ENCODE measurements at regions of chr1 and their contacts with region 1.

Region 1: DNA sequence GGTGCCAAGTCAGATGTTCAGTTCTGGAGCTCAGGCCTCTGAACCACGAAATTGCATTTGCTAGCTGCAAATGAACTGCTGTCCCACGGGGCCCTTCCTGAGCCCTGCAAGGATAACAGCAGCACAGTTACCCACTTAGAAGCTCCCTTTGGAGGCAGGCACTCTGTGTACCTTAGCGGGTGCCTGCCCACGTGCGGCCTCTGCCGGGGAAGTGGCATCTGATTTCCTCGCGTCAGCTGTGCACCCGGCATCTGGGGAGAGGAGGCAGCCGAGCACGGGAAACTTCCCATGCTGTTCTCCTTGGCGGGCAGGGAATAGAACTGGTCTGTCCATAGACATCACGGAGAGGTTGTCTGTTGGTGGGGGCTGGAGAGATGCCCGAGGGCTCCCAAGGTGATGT is 148.0 kb upstream of the C1orf174 start:
- DNase-seq: no peak
- ATAC-seq: no peak
- H3K4me3 Mint-ChIP-seq: no peak overlapping the region
- H3K27ac Mint-ChIP-seq: no peak overlapping the region
- H3K4me1 Mint-ChIP-seq: peaks cover 62% of the 10 kb centered on the region
- H3K27me3 Mint-ChIP-seq: peaks cover 2% of the 10 kb centered on the region
- CTCF ChIP-seq: no peak

Region 2: DNA sequence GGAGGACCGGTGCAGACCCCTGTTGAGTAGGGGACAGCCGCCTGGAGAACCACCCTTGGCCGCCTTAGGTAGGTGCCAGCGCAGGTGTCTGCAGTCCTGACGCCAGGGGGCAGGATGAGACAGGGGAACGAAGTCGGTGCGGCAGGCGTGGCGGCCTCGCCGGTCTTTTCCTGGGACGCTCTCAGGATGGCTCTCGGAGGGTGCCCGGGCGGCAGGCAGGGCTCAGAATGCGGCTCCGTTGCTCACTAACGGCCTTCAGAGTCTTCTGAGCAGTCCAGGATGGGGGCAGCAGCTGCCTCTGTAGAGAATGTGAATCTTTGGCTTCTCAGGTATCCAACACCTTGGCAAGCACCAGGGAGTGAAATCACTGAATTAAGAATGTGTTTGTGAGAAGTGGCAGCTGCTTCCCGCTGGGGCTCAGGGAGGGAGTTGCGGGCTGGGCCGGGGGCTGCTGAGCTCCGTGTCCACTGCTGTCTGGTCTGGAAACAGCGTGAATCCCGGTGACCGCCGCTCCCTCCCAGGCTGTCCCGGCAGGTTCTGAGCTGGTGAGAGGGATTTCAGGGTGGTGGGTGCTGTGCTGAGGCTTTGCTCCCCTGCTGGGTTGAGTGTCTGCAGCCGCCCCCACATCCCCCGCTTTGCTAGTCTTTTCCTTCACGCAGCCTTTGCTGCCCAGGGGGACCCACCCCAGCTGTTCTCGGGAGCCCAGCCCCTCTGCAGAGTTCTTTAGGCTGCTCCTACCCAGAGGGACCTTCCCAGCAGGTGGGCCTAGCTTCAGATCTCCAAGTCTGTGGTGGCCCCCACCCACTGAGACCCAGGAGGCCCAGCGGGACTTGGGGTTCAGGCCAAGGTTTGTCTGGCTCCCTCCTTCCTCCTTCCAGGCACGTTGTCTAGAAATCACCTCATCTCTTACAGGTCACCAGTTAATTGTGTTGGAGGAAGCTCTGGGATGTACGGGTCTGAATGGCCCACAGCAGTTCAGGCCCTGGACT is 136.9 kb before region 1 on chr1:
- CTCF ChIA-PET with region 1: interaction called, 10 read pairs
- POLR2A ChIA-PET with region 1: no interaction called
- intact Hi-C with region 1: loop called (anchors 5 kb)
- DNase-seq: peak; percentile 70
- ATAC-seq: peak; percentile 92
- H3K4me3 Mint-ChIP-seq: no peak overlapping the region
- H3K27ac Mint-ChIP-seq: no peak overlapping the region
- H3K4me1 Mint-ChIP-seq: peaks cover 23% of the 10 kb centered on the region
- H3K27me3 Mint-ChIP-seq: peaks cover 3% of the 10 kb centered on the region
- CTCF ChIP-seq: peak; percentile 67

Region 3: DNA sequence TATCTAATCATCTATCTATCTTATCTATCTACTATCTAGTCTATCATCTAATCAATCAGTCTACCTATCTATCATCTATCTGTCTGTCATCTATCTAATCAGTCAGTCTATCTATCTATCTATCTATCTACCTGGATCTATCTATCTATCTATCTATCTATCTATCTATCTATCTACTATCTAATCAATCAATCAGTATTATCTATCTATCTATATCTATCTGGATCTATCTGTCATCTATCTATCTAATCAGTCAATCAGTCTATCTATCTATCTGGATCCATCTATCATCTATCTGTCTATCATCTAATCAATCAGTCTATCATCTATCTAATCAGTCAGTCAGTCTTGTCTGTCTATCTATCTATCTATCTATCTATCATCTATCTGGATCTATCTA is 121.1 kb before region 1 on chr1:
- CTCF ChIA-PET with region 1: no interaction called
- POLR2A ChIA-PET with region 1: no interaction called
- intact Hi-C with region 1: no loop called
- DNase-seq: no peak
- ATAC-seq: no peak
- H3K4me3 Mint-ChIP-seq: no peak overlapping the region
- H3K27ac Mint-ChIP-seq: no peak overlapping the region
- H3K4me1 Mint-ChIP-seq: peaks cover 3% of the 10 kb centered on the region
- H3K27me3 Mint-ChIP-seq: no peaks in the 10 kb centered on the region
- CTCF ChIP-seq: no peak

Region 4: GRCh38 chr1:4006676-4007374 is 41.3 kb before region 1 on chr1:
- CTCF ChIA-PET with region 1: no interaction called
- POLR2A ChIA-PET with region 1: interaction called, 5 read pairs
- intact Hi-C with region 1: loop called (anchors 5 kb)
- DNase-seq: no peak
- ATAC-seq: peak; percentile 62
- H3K4me3 Mint-ChIP-seq: peak overlapping the region; percentile 50
- H3K27ac Mint-ChIP-seq: peak overlapping the region; percentile 93
- H3K4me1 Mint-ChIP-seq: peaks cover 28% of the 10 kb centered on the region
- H3K27me3 Mint-ChIP-seq: no peaks in the 10 kb centered on the region
- CTCF ChIP-seq: no peak

Region 5: DNA sequence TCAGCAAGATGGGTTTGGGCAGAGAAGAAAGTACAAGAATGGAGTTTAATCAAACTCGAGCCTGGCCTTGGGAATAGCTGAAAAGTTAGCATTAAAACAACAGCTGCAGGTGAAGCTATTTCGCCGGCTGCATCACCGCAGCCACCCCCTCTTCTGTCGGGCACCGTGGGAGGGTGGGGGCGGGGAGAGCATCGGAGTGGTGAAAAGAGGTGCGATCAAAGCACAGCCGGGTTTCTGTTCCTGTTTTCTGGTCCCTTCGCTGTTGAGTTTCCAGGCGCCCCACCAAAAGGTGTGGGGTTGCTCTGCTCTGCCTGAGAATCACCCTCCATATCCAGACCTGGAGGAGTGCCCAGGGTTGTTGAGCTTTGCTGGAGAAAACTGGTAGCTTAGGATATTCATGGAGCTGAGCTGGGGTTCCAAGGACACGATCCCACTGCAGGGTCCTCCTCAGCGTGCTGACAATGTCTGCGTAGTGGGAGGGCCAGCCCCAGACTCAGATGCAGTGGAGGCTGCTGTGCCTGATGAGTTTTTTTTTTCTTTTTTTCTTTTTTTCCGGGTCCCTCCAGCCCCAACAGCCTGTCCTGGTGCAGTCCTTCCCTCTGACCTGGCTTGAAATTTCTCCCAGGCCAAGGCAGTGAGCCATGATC is 20.5 kb before region 1 on chr1:
- CTCF ChIA-PET with region 1: no interaction called
- POLR2A ChIA-PET with region 1: interaction called, 4 read pairs
- intact Hi-C with region 1: loop called (anchors 2 kb)
- DNase-seq: peak; percentile 65
- ATAC-seq: peak; percentile 94
- H3K4me3 Mint-ChIP-seq: peak overlapping the region; percentile 69
- H3K27ac Mint-ChIP-seq: peak overlapping the region; percentile 75
- H3K4me1 Mint-ChIP-seq: peaks cover 63% of the 10 kb centered on the region
- H3K27me3 Mint-ChIP-seq: no peaks in the 10 kb centered on the region
- CTCF ChIP-seq: no peak

Measured in activated B cell treated with CpG ODN at 0.5 μM for 24 hours (primary cell).